ENCODE measurements at regions of chr2 and their contacts with region 1.

Region 1: DNA sequence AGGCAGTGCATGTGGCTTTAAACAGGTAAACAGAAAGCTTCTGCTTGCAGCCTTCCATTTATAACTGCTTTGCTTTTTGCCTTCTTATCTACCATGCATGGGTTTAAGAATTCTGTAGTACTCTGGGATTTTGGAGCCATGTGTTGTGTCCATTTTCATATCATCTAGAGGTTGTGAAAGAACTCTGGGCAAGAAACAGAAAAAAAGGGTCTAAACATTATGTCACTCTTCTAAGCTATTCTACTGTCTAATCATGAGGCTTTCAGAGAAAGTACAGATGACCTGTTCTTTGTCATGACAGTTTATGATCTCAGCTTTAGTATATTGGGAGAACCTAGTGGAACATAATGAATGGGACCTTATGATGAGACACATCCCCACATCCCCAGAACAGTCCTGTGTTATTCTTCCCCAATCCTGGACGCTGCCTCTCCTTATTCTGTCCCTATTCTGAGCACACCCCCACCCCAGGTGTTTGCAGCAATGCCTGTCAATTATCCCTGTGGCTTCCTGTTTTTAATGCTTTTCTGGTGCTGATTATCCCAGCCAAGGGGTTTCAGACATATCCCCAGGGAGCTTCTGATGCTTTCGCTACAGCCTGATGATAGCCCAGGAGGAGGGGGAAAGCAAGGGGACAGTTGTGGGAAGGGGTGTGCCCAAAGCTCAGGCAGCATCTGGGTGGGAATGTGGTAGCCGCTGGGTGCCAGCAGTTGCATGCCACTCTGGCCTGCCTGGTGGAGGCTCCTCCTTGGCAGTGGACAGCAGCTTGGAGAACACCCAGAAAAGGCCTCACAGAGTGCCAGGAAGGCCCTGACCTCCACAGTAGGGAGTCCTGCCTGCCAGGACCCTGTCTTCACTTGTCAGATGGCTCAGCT is 169.5 kb upstream of the MAP3K20 start:
- DNase-seq: no peak
- H3K4me3 ChIP-seq: no peak overlapping the region
- H3K27me3 ChIP-seq: peaks cover 1% of the 10 kb centered on the region
- CTCF ChIP-seq: no peak

Region 2: GRCh38 chr2:172531309-172531708 is 374.9 kb before region 1 on chr2:
- CTCF ChIA-PET with region 1: no interaction called
- POLR2A ChIA-PET with region 1: no interaction called
- DNase-seq: no peak
- H3K4me3 ChIP-seq: no peak overlapping the region
- H3K27me3 ChIP-seq: no peaks in the 10 kb centered on the region
- CTCF ChIP-seq: no peak

Region 3: DNA sequence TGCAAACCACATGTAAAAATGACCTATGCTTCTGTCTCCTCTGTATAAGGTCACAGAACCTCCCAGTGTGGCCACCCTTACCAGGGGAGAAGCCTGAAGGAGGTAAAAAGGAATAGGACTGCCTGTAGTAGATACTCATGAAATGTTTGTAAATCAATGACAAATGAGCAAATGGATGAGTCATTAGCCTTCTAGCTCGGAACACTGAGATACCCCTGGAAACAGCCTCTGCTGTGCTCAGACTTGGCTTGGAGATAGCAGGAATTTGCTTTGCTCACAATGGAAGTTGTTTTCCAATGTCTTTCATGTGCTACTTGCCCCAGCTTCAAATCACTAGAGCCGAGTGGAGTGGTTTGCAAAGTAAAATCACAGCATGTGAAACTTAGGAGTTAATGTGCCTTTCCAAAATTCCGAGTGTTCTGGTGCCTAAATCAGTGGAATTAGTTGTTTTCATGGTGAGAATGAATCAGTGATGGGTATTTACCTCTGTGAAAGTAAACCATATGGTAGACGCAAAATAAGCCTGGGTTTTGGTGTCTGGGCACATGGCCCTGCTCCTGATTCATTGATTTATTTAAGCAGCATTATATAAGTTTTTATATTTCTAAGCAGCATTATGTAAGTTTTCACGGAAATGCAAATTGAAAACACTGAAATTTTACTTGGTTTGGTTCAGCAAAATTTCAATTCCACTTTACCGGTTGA is 15.5 kb after region 1 on chr2:
- CTCF ChIA-PET with region 1: no interaction called
- POLR2A ChIA-PET with region 1: interaction called, 32 read pairs
- DNase-seq: no peak
- H3K4me3 ChIP-seq: no peak overlapping the region
- H3K27me3 ChIP-seq: no peaks in the 10 kb centered on the region
- CTCF ChIP-seq: no peak

Region 4: DNA sequence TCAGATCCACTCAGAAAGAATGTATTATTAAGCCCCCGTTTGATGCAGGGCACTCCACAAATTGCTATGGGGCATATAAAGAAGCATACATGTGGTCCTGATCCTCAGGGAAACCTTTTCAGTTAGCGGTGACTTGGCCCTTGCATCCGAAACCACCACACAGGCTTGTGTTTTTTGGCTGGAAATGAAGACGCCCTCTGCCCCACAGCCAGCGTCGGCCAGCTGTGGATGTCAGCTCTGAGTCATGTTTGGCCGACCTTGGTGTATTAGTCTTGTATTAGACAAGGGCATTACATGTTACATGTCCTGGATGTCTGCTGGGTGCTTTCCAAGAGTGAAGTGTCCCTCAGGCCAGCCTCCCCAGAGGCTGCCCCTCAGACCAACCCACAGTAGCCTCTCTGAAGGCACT is 61.9 kb after region 1 on chr2:
- CTCF ChIA-PET with region 1: no interaction called
- POLR2A ChIA-PET with region 1: no interaction called
- DNase-seq: peak; percentile 27
- H3K4me3 ChIP-seq: no peak overlapping the region
- H3K27me3 ChIP-seq: no peaks in the 10 kb centered on the region
- CTCF ChIP-seq: no peak